Ascending aorta (tissue), 2 donors: ENCODE measurements at regions of chr9 and their contacts with region 1.

Region 1: DNA sequence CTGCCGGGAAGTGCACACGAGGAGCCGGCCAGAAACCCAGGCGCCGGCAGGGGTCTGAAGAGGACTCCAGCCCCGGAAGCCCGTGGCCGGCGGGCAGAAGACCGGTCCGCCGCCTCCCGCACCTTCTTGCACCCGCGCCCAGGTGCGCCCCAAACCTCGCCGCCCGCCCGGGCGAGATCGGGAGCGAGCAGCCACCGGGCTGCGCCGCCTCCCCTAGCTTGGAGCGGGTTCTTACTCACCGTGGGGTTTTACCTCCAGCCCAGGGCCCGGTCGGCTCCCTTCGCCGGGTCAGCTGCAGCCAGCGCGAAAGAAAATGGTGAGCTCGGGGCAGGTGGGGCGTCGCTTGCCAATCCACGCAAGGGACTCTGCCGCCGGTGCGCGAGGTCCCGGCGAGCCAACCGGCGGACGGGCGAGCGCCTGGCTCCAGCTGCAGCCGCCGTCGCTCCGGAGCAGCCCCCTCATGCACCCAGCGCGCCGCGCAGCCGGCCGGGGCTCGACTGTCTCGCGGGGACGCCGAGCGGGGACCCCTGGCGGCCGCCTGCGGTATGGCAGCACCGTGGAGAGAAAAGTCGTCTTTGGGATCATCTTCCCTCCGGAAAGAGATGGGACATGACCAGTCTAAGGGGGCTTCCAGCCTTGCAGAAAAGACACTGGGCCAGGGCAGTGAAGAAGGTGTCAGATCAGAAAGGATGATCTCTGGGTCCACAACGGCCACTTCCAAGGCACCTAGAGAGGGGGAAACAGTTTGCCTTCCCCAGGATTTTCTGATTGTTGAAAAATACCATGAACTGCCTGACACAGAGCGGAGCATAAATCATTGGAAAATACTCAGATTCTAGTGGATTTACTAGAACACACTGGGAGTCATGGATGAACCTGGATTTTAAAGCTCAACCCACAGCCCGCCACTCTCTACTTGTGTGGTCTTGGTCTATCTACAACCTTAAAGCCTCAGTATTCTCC is at the start of gene MOB3B:
- DNase-seq: peak in 1 of 2 donors; percentile 90
- H3K4me3 ChIP-seq: peak within 1 kb of the TSS; percentile 84 to 88
- H3K27ac ChIP-seq: peak within 1 kb of the TSS; percentile 88 to 95
- H3K4me1 ChIP-seq: peaks cover 3 to 33% of the 10 kb centered on the region in 2 donors
- H3K27me3 ChIP-seq: no peaks in the 10 kb centered on the region
- CTCF ChIP-seq: peak; percentile 89 to 96 (median 92)
- total RNA-seq, gene MOB3B: 2.4 TPM

Region 2: DNA sequence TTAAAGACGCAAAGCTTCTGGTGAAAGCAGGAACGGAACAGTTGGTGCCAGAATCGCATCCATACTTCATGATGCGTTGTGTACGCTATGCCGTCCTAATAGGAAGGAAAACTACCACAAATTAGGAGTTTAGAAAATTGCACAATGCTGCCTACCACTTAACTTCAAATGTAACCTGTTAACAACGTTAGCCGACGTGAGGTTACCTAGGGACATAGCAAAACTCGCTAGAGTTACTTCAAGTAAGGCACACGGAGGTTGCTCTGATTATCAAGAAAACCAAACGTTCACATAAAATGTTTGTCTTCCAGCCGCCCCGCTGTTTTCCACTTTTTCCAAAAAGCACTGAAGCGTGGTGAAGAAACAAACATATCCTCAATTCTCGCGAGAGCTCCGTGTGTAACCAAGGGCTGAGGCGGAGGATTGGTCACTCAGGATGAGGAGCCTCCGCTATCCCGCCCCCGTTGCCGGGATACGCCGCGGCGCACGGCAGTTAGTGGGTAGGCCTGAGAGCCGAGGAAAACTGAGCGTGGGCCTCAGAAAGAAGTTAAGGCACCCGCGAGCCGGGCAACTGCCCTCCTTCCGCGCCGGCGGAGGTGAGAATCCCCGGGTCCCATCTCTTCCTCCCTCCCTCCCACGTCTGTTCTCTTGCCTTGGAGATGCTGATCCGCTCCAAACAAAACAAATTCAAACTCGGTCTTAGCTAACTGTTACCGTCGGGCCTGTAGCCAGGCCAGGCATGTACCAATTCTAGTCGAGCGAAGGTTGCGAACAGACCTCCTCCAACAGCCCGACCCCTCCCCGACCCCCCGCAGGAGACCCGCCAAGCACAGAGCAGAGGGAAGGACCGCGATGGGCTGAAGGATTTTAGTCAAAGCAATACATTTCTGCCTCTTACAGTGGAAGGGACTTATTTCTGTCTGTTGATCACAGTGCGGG is 573.4 kb before region 1 on chr9 and contains the start of gene IFT74:
- intact Hi-C with region 1: loop called (anchors 5 kb)
- DNase-seq: peak; percentile 97 to 99
- H3K4me3 ChIP-seq: peak within 1 kb of the TSS; percentile 63 to 79
- H3K27ac ChIP-seq: peak within 1 kb of the TSS; percentile 87 to 90
- H3K4me1 ChIP-seq: peaks cover 2 to 11% of the 10 kb centered on the region in 2 donors
- H3K27me3 ChIP-seq: no peaks in the 10 kb centered on the region
- CTCF ChIP-seq: no peak
- total RNA-seq, gene IFT74: 5.2 TPM

Region 3: GRCh38 chr9:27333241-27334052 is 196.2 kb before region 1 on chr9:
- intact Hi-C with region 1: loop called (anchors 1 kb)
- DNase-seq: peak in 1 of 2 donors; percentile 85
- H3K4me3 ChIP-seq: no peak overlapping the region
- H3K27ac ChIP-seq: no peak overlapping the region
- H3K4me1 ChIP-seq: peaks cover 8 to 26% of the 10 kb centered on the region in 2 donors
- H3K27me3 ChIP-seq: no peaks in the 10 kb centered on the region
- CTCF ChIP-seq: peak; percentile 71 to 86 (median 80)

Region 4: GRCh38 chr9:27414220-27414761 is 115.3 kb before region 1 on chr9:
- intact Hi-C with region 1: loop called (anchors 5 kb)
- DNase-seq: no peak
- H3K4me3 ChIP-seq: peak overlapping the region in 1 of 2 donors; percentile 54
- H3K27ac ChIP-seq: peak overlapping the region; percentile 49 to 63
- H3K4me1 ChIP-seq: peaks cover 0 to 12% of the 10 kb centered on the region in 2 donors
- H3K27me3 ChIP-seq: no peaks in the 10 kb centered on the region
- CTCF ChIP-seq: no peak

Region 5: GRCh38 chr9:27539479-27540441 is 10.2 kb after region 1 on chr9:
- intact Hi-C with region 1: loop called (anchors 1 kb)
- DNase-seq: peak; percentile 18 to 77
- H3K4me3 ChIP-seq: peak overlapping the region in 1 of 2 donors; percentile 23
- H3K27ac ChIP-seq: peak overlapping the region; percentile 85 to 88
- H3K4me1 ChIP-seq: peaks cover 20 to 69% of the 10 kb centered on the region in 2 donors
- H3K27me3 ChIP-seq: no peaks in the 10 kb centered on the region
- CTCF ChIP-seq: no peak

Region 6: DNA sequence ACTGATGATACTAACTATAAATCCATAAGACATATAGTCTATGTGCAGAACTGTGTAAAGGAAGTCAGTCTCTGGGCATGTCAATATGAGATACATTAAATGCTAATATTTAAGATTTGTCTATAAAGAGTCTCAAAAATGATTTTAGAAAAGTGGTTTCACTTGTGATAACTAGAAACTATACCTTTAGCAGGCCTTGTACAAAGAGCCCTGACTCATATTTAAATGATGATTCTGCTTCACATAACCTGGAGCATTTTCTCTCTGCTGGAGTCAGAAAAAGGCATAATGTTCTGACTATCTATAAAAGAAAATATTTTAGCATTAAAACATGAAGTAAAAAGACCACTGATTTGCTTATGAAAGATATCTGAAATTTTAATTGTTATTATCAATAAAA is 28.7 kb after region 1 on chr9:
- intact Hi-C with region 1: no loop called
- DNase-seq: no peak
- H3K4me3 ChIP-seq: no peak overlapping the region
- H3K27ac ChIP-seq: no peak overlapping the region
- H3K4me1 ChIP-seq: no peaks in the 10 kb centered on the region
- H3K27me3 ChIP-seq: no peaks in the 10 kb centered on the region
- CTCF ChIP-seq: no peak

Region 7: DNA sequence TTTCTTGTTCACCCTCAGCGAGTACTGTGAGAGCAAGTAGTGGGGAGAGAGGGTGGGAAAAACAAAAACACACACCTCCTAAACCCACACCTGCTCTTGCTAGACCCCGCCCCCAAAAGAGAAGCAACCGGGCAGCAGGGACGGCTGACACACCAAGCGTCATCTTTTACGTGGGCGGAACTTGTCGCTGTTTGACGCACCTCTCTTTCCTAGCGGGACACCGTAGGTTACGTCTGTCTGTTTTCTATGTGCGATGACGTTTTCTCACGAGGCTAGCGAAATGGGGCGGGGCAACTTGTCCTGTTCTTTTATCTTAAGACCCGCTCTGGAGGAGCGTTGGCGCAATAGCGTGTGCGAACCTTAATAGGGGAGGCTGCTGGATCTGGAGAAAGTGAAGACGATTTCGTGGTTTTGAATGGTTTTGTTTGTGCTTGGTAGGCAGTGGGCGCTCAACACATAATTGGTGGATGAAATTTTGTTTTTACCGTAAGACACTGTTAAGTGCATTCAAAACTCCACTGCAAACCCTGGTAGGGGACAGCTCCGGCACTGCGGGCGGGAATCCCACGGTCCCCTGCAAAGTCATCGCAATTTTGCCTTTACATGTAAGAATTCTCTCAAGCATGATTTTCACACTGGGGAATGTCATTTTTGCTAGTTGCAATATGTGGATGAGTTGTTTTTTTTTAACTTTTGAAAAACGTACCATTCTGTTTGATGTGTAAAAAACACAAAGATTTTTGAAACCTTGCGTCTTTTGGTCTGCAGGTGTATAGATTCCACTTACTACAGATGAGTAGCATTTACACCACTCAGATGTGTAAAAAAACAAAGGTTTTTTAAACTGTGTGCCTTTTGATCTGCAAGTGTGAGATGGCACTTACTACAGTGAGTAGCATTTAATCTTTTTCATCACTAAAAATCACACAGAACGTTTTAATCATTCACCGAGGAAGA is 44.3 kb after region 1 on chr9:
- intact Hi-C with region 1: loop called (anchors 1 kb)
- DNase-seq: peak; percentile 97 to 99
- H3K4me3 ChIP-seq: peak overlapping the region; percentile 84 to 98
- H3K27ac ChIP-seq: peak overlapping the region; percentile 97 to 100
- H3K4me1 ChIP-seq: peaks cover 7 to 14% of the 10 kb centered on the region in 2 donors
- H3K27me3 ChIP-seq: no peaks in the 10 kb centered on the region
- CTCF ChIP-seq: no peak

Region 8: DNA sequence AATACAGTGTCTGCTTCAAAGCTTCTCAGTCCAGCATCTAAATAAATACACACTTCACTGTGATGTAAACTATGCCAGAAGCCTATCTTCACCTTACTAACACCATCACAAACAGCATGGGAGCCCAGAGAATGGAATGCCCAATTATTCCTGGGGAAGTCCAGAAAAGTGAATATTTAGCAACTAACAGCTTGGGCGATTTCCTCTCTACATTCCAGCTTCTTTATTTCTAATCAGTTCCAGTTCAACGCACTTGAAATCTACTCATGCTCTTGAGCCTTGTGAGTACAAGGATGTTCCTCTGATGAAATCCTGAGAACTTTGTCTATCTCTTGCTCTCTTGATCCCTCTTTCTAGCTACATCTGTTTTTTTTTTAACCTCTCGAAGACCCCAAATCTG is 144.0 kb after region 1 on chr9:
- intact Hi-C with region 1: no loop called
- DNase-seq: no peak
- H3K4me3 ChIP-seq: no peak overlapping the region
- H3K27ac ChIP-seq: no peak overlapping the region
- H3K4me1 ChIP-seq: no peaks in the 10 kb centered on the region
- H3K27me3 ChIP-seq: no peaks in the 10 kb centered on the region
- CTCF ChIP-seq: no peak